Endothelial cell of umbilical vein (primary cell): ENCODE measurements at regions of chr3 and their contacts with region 1.

Region 1: DNA sequence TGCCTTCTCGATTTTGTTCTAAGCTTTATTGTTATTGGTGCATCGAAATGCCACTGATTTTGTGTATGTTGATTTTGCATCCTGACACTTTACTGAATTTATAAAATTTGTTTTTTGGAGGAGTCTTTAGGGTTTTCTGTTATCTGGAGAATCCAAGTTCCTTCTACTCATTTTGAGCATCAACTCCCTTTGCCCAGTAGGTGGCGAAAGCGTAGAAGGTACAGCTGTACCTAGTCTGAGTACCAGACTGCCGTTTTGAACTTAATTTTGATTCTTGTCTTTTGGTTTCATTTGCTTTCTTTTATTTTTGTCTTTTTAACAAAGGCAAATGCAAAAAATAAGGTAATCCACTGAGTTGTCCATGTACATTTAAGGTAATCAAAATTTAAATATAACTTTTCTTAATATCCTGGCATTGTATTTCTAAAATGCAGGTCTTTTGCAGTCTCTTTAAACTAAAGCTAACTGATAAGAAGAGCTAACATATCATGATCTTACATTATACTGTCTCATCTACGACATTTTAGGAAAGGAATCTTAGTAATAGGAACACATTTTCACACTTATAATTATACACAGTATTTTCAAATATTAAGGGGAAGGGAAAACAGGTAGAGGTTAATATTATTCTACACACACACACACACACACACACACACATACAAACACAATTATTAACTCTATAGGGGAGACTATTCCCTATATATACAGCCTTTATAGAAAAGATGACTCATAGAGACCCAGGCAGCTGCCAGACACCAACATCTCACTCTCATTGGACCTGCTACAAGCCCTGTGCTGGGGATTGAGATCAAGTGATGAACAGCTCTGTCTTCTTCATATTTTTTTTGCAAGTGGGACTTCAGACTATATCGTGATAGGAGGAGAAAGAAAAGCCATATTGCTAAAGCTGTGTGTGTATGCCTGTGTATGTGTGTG is 71.7 kb downstream of the SYNPR start:
- DNase-seq: peak; percentile 47
- H3K4me3 ChIP-seq: no peak overlapping the region
- H3K27ac ChIP-seq: no peak overlapping the region
- H3K4me1 ChIP-seq: no peaks in the 10 kb centered on the region
- H3K27me3 ChIP-seq: peaks cover 0 to 3% of the 10 kb centered on the region in 2 experiments
- CTCF ChIP-seq: peak; percentile 63 to 77
- POLR2A ChIP-seq: no peak

Region 2: GRCh38 chr3:63364910-63365431 is 15.1 kb after region 1 on chr3:
- CTCF ChIA-PET with region 1: interaction called, 11 read pairs
- POLR2A ChIA-PET with region 1: no interaction called
- dilution Hi-C with region 1: no loop called
- intact Hi-C with region 1: no loop called
- DNase-seq: no peak
- H3K4me3 ChIP-seq: no peak overlapping the region
- H3K27ac ChIP-seq: no peak overlapping the region
- H3K4me1 ChIP-seq: no peaks in the 10 kb centered on the region
- H3K27me3 ChIP-seq: no peaks in the 10 kb centered on the region
- CTCF ChIP-seq: no peak
- POLR2A ChIP-seq: no peak

Region 3: DNA sequence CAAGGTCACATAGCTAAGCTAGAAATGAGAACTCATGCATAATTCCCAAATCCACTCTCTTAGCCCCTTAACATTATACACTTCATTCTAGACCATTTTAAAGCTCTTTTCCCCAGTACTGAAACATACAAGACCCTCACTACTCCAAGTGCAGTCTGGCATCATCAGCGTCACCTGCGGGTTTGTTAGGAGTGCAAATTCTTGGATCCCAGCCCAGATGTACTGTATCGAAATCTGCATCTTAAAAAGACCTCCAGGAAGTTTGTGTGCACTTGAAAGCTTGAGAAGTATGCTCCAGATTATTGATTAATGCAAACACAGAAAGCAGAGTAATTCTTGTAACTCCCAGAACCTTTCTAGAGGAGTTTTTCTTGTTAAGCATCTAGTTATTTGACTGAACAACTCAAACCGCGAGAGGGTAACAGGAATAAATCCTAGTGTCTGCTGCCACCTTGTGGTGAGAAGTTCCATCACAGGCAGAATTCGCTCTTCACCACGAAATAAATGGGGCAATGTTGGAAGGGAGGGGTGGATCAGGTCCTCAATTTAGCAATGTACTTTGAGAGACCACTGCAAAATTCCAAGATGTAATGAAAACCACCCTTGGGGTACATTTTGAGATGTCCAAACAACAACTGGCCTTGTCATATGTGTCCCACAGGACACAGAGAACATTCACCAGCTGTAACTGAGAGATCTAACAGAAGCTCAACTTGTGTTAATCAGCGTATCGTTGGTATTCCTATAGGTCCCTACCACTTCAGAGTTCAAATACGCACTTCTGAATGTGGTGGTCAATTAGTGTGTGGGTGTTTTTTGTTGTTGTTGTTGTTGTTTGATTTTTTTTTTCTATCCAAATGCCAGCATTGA is 468.7 kb after region 1 on chr3:
- CTCF ChIA-PET with region 1: interaction called, 153 read pairs
- POLR2A ChIA-PET with region 1: no interaction called
- dilution Hi-C with region 1: no loop called
- intact Hi-C with region 1: loop called (anchors 1 kb)
- DNase-seq: peak; percentile 61
- H3K4me3 ChIP-seq: no peak overlapping the region
- H3K27ac ChIP-seq: no peak overlapping the region
- H3K4me1 ChIP-seq: no peaks in the 10 kb centered on the region
- H3K27me3 ChIP-seq: no peaks in the 10 kb centered on the region
- CTCF ChIP-seq: peak; percentile 63 to 75
- POLR2A ChIP-seq: no peak

Region 4: GRCh38 chr3:63824309-63824708 is 474.5 kb after region 1 on chr3:
- CTCF ChIA-PET with region 1: interaction called, 153 read pairs
- POLR2A ChIA-PET with region 1: no interaction called
- dilution Hi-C with region 1: no loop called
- intact Hi-C with region 1: no loop called
- DNase-seq: peak; percentile 17
- H3K4me3 ChIP-seq: no peak overlapping the region
- H3K27ac ChIP-seq: no peak overlapping the region
- H3K4me1 ChIP-seq: peaks cover 3% of the 10 kb centered on the region
- H3K27me3 ChIP-seq: no peaks in the 10 kb centered on the region
- CTCF ChIP-seq: no peak
- POLR2A ChIP-seq: no peak

Region 5: DNA sequence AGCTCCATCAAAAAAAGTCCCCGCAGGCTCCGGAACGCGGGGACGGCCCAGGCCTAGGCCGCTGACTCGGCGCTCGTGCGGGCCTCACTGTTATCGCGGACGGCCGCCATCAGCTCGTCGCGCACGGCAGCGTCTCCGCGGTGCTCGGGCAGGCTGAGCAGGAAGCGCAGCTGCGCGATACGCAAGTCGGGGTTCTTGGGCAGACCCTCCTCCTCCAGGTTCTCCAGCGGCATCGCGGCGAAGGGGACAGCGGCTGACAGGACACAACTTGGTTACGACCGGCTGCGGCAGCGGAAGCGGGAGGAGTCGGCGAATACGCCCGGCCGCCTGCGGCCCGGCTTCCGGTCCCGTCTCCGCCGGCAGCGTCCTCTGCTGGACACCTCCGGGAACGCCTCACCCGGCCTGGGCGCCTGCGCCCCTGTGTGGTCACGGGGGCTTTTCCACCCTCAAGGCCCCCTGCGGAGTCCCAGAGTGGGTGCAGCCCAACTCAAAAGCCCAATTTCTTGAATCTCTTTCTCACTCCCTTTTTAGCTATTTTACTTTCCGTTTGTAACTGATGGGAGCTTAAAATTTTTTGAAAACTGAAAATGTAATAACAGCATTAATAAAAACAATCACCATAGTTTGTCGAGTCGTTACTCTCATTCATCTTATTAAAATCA is 673.5 kb after region 1 on chr3 and contains the start of gene PSMD6:
- CTCF ChIA-PET with region 1: interaction called, 4 read pairs
- POLR2A ChIA-PET with region 1: no interaction called
- dilution Hi-C with region 1: no loop called
- intact Hi-C with region 1: loop called (anchors 1 kb)
- DNase-seq: peak; percentile 91
- H3K4me3 ChIP-seq: peak within 1 kb of the TSS; percentile 40 to 83 (median 72)
- H3K27ac ChIP-seq: peak within 1 kb of the TSS; percentile 61
- H3K4me1 ChIP-seq: peaks cover 11% of the 10 kb centered on the region
- H3K27me3 ChIP-seq: peaks cover 9 to 19% of the 10 kb centered on the region in 2 experiments
- CTCF ChIP-seq: peak; percentile 98 to 100
- POLR2A ChIP-seq: peak; percentile 83
- total RNA-seq, gene PSMD6: 89.4 and 90.8 TPM in 2 replicates

Region 6: GRCh38 chr3:64484289-64484992 is 1134.6 kb after region 1 on chr3:
- CTCF ChIA-PET with region 1: interaction called, 10 read pairs
- POLR2A ChIA-PET with region 1: no interaction called
- dilution Hi-C with region 1: no loop called
- intact Hi-C with region 1: loop called (anchors 5 kb)
- DNase-seq: peak; percentile 81
- H3K4me3 ChIP-seq: no peak overlapping the region
- H3K27ac ChIP-seq: no peak overlapping the region
- H3K4me1 ChIP-seq: peaks cover 4% of the 10 kb centered on the region
- H3K27me3 ChIP-seq: peaks cover 8 to 13% of the 10 kb centered on the region in 2 experiments
- CTCF ChIP-seq: peak; percentile 78 to 81
- POLR2A ChIP-seq: no peak